ENCODE measurements at regions of chr2 and their contacts with region 1.

Region 1: GRCh38 chr2:1910592-1911246 is 166.4 kb upstream of the PXDN start:
- DNase-seq: no peak
- ATAC-seq: peak in 1 of 2 donors; percentile 44

Region 2: GRCh38 chr2:2095360-2096093 is 184.8 kb after region 1 on chr2:
- intact Hi-C with region 1: loop called in 1 of 2 experiments (anchors 10 kb)
- DNase-seq: no peak
- ATAC-seq: no peak

Region 3: GRCh38 chr2:3334392-3335345 is 1424.0 kb after region 1 on chr2:
- intact Hi-C with region 1: no loop called
- DNase-seq: no peak
- ATAC-seq: peak in 1 of 2 donors; percentile 36

Measured in left cardiac atrium (tissue), 4 donors.